GM12878 (cell line): ENCODE measurements at regions of chr22 and their contacts with region 1.

Region 1: GRCh38 chr22:30289134-30289979 is at the start of gene CASTOR1:
- DNase-seq: no peak
- ATAC-seq: peak; percentile 83
- H3K4me3 ChIP-seq: peak within 1 kb of the TSS; percentile 74
- H3K27ac ChIP-seq: peak within 1 kb of the TSS; percentile 55
- H3K4me1 ChIP-seq: peaks cover 25% of the 10 kb centered on the region
- H3K27me3 ChIP-seq: no peaks in the 10 kb centered on the region
- CTCF ChIP-seq: no peak
- EP300 ChIP-seq: no peak
- POLR2A ChIP-seq: no peak; the same call in none of the 2 replicates
- RAD21 ChIP-seq: no peak
- polyA plus RNA-seq, gene CASTOR1: 0.31 to 1.2 TPM

Region 2: DNA sequence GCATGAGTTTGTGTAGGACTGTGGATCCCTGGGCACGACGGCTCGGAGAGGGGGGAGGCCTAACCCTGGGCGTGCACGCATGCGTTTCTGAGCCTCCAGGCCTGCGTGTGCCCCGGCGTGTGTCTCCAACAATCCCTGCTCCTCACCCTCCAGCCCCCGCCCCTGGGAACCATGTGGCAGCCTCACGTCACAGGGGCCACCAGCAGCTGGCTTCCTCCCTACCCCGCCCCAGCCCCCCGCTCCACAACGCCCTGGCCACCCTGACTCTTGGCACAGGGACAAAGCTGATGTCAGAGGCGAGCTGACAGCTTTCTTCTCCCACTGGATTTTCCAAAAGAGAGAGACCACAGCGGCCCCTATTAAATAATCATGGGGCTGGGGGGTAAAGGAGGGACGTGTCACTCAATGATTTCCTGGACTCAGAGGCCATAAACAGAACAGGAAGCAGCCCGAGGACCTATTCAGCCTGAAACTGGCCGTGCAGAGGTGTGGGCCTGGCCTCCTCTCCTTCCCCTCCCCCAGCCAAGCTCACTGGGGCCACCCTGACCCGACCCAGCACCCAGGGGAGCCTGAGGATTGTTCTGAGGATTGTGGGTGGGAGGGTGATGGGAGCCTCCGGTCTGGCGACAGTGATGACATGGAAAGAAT is 36.0 kb before region 1 on chr22:
- CTCF ChIA-PET with region 1: interaction called, 16 read pairs
- POLR2A ChIA-PET with region 1: no interaction called
- RAD21 ChIA-PET with region 1: interaction called, 5 read pairs
- SMC1A ChIA-PET with region 1: interaction called, 4 read pairs
- in situ Hi-C with region 1: no loop called
- intact Hi-C with region 1: no loop called
- DNase-seq: no peak
- ATAC-seq: peak; percentile 30
- H3K4me3 ChIP-seq: no peak overlapping the region
- H3K27ac ChIP-seq: no peak overlapping the region
- H3K4me1 ChIP-seq: peaks cover 10% of the 10 kb centered on the region
- H3K27me3 ChIP-seq: no peaks in the 10 kb centered on the region; a peak in 1 of 4 replicates
- CTCF ChIP-seq: no peak
- EP300 ChIP-seq: no peak
- POLR2A ChIP-seq: no peak
- RAD21 ChIP-seq: no peak

Region 3: DNA sequence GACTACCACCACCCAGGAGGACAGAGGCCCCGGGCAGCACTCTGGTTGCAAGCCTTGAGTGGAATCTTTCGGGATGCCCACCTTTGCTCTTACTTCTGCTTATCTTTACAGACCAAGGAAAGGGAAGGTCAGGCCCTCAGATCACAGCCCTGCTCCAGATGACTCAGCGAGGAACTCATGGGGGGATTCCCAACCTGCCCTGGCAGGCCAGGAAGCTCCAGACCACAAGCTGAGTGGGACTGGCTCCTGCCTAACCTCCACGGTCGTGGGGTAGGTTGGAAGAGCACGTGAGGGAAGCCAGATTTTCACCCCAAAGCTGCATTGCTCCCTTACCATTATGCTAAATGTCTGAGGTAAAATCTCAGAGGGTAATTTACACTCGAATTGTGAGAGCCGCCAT is 25.6 kb after region 1 on chr22:
- CTCF ChIA-PET with region 1: interaction called, 177 read pairs
- POLR2A ChIA-PET with region 1: interaction called, 6 read pairs
- RAD21 ChIA-PET with region 1: interaction called, 88 read pairs
- SMC1A ChIA-PET with region 1: interaction called, 84 read pairs
- in situ Hi-C with region 1: no loop called
- intact Hi-C with region 1: no loop called
- DNase-seq: peak; percentile 66
- ATAC-seq: peak; percentile 67
- H3K4me3 ChIP-seq: 0 out of 2 replicates have a peak overlapping the region, but pooled peaks have one; percentile 1
- H3K27ac ChIP-seq: peak overlapping the region; percentile 80
- H3K4me1 ChIP-seq: peaks cover 61% of the 10 kb centered on the region
- H3K27me3 ChIP-seq: no peaks in the 10 kb centered on the region
- CTCF ChIP-seq: no peak
- EP300 ChIP-seq: peak in 1 of 2 experiments; percentile 39; a peak in 1 of 4 replicates
- POLR2A ChIP-seq: no peak
- RAD21 ChIP-seq: no peak

Region 4: GRCh38 chr22:30356449-30357235 is 67.3 kb after region 1 on chr22 and contains the starts of genes CCDC157 and SF3A1:
- CTCF ChIA-PET with region 1: interaction called, 24 read pairs
- POLR2A ChIA-PET with region 1: interaction called, 4 read pairs
- RAD21 ChIA-PET with region 1: interaction called, 16 read pairs
- SMC1A ChIA-PET with region 1: interaction called, 24 read pairs
- in situ Hi-C with region 1: no loop called
- intact Hi-C with region 1: loop called (anchors 2 kb)
- DNase-seq: peak; percentile 56
- ATAC-seq: peak; percentile 96
- H3K4me3 ChIP-seq: peak within 1 kb of the TSS; percentile 92
- H3K27ac ChIP-seq: peak within 1 kb of the TSS; percentile 92
- H3K4me1 ChIP-seq: 0 out of 2 replicates have a peak, but pooled peaks cover 5% of the 10 kb centered on the region
- H3K27me3 ChIP-seq: no peaks in the 10 kb centered on the region
- CTCF ChIP-seq: no peak
- EP300 ChIP-seq: 0 out of 4 replicates have a peak, but pooled peaks of 1 of the 2 experiments have one; percentile 20
- POLR2A ChIP-seq: peak; percentile 100
- RAD21 ChIP-seq: no peak
- polyA plus RNA-seq, gene CCDC157: 0.10 to 0.46 TPM
- polyA plus RNA-seq, gene SF3A1: 10.4 to 13.4 TPM

Region 5: DNA sequence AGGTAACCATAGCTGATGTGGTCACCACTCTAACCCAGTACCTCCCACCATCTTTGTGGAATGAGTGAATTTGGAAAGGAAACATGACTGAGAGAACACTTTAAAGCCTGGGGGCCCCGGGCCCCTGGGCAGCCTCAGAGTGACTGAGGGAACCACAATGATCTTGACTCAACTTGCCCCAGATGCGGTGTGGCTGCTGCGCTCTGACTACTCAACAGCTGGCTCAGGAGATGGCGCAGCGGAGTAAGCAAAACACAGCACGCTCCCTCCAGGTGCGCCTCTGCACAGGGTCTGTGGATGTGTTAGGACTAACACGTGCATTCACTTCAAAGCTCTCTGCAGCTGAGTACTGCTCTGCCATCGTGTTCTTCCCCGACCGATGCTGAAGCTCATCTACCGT is 91.9 kb after region 1 on chr22:
- CTCF ChIA-PET with region 1: interaction called, 436 read pairs
- POLR2A ChIA-PET with region 1: no interaction called
- RAD21 ChIA-PET with region 1: interaction called, 277 read pairs
- SMC1A ChIA-PET with region 1: interaction called, 201 read pairs
- in situ Hi-C with region 1: loop called (anchors 5 kb)
- intact Hi-C with region 1: no loop called
- DNase-seq: no peak
- ATAC-seq: no peak
- H3K4me3 ChIP-seq: no peak overlapping the region
- H3K27ac ChIP-seq: no peak overlapping the region
- H3K4me1 ChIP-seq: no peaks in the 10 kb centered on the region
- H3K27me3 ChIP-seq: no peaks in the 10 kb centered on the region
- CTCF ChIP-seq: no peak
- EP300 ChIP-seq: no peak
- POLR2A ChIP-seq: no peak
- RAD21 ChIP-seq: no peak

Region 6: DNA sequence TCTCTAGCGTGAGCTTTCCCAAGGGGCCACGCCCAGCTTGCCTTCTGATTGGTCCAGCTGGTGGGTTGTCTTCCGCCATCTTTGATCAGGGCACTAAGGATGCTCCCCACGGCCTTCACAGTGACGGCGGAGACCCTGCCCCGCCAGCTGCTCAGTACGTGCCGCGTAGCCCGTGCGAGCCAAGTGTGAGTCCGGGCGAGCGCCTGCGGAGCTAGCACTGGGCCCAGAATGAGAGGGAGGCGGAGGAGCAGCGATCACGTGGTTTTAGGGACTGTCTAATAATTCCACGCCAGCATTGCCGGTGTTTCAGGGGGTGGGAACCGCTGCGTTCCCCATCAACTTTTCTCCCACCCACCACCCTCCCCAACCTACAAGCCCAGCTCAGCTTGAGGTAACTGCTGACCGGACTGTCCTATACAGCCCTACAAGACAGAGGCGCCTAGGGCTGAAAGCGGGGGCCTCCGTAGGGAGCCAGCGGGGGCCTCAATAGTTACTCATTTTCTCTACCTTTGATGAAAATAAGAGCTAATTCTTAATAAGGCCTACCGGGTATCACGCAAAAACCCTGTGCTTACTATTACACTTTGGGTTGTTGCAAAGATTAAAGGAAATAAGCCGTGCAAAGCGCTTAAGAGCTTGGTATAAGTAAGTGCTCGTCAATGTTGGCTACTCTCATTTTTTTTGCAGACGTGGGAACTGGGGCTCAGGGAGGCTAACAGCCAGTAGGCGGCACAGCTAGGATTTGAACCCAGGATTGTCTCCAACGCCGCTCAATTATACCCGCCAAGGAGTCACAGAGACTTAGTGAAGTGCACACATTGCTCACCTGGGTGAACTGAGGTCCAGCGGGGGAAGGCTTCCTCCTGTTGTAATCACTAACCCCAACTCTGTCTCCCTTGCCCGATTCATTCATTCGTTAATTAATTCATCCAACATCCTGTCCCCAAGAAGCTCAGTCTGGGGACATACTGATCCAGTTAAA is 134.9 kb after region 1 on chr22:
- CTCF ChIA-PET with region 1: interaction called, 73 read pairs
- POLR2A ChIA-PET with region 1: interaction called, 8 read pairs
- RAD21 ChIA-PET with region 1: interaction called, 64 read pairs
- SMC1A ChIA-PET with region 1: interaction called, 10 read pairs
- in situ Hi-C with region 1: no loop called
- intact Hi-C with region 1: loop called (anchors 2 kb)
- DNase-seq: peak; percentile 99
- ATAC-seq: peak; percentile 88
- H3K4me3 ChIP-seq: peak overlapping the region; percentile 86
- H3K27ac ChIP-seq: peak overlapping the region; percentile 91
- H3K4me1 ChIP-seq: peaks cover 22% of the 10 kb centered on the region
- H3K27me3 ChIP-seq: no peaks in the 10 kb centered on the region
- CTCF ChIP-seq: peak in 1 of 3 experiments; percentile 15; a peak in 1 of 6 replicates
- EP300 ChIP-seq: no peak; a peak in 1 of 4 replicates
- POLR2A ChIP-seq: peak; percentile 85
- RAD21 ChIP-seq: no peak